ENCODE measurements at regions of chr1 and their contacts with region 1.

Region 1: DNA sequence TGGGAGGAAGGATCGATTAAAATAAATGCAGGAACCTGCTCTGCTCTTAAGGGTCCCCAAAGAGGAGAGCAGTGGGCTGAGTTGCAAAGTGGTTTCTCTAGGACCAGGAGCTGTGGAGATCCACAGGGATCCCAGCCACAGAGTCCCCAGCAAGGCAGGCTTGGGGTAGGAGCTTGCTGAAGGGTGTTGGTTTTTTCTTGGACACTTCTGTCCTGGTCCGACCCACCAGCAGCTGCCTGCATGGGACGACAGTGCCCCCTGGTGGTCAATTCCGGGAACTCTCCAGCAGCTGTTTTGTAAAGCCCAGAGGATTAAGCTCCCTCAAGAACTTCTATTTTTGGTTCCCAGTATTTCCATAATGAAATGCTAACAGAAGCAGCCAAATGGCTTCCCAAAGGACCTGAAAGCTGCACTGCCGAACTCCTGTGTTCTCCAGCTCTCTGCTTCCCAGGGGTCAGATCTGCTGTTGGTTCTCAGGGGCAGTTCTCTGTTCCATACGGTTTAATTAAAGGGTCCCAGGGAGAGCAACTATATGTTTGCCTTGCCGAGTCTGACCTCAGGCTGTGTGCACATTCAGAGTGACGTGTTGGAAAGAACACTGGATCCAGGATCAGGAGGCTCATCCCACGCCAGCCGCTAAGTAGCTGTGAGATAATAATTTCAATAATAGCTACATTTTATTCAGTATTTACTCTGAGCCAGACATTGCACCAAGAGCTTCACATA is 23.2 kb downstream of the NENF start:
- DNase-seq: peak; percentile 15
- H3K4me3 ChIP-seq: no peak overlapping the region
- H3K27me3 ChIP-seq: no peaks in the 10 kb centered on the region; the same call in 1 of the 2 replicates
- CTCF ChIP-seq: peak; percentile 97

Region 2: GRCh38 chr1:211680752-211681327 is 775.1 kb before region 1 on chr1:
- CTCF ChIA-PET with region 1: interaction called, 30 read pairs
- POLR2A ChIA-PET with region 1: no interaction called
- DNase-seq: peak; percentile 52
- H3K4me3 ChIP-seq: no peak overlapping the region
- H3K27me3 ChIP-seq: no peaks in the 10 kb centered on the region
- CTCF ChIP-seq: peak; percentile 70

Region 3: GRCh38 chr1:211698161-211699026 is 757.6 kb before region 1 on chr1:
- CTCF ChIA-PET with region 1: interaction called, 14 read pairs
- POLR2A ChIA-PET with region 1: no interaction called
- DNase-seq: no peak
- H3K4me3 ChIP-seq: no peak overlapping the region
- H3K27me3 ChIP-seq: peaks cover 2% of the 10 kb centered on the region; the same call in 1 of the 2 replicates
- CTCF ChIP-seq: peak; percentile 98

Region 4: DNA sequence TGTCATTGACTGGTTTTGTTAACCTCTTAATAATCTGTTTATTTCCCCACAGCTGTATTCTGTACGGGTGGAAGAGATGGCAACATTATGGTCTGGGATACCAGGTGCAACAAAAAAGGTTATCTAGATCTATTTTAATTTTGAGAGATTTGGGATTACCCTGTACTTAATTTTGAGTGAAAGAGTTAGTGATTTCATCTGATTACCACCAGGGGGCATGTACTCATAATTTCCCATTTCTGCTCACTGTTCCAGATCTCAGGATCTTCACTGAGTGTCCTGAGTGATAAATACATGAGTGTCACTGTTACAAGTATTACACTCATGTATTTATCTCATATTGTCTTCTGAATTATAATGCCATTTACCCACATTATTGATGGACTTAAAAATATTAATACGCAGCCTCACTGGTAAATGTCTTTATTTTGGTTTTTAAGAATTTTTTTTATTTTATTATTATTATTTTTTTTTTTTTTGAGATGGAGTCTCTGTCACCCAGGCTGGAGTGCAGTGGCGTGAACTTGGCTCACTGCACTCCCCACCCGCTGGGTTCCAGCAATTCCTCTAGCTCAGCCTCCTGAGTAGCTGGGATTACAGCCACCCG is 393.0 kb before region 1 on chr1:
- CTCF ChIA-PET with region 1: interaction called, 152 read pairs
- POLR2A ChIA-PET with region 1: no interaction called
- DNase-seq: no peak
- H3K4me3 ChIP-seq: no peak overlapping the region
- H3K27me3 ChIP-seq: no peaks in the 10 kb centered on the region
- CTCF ChIP-seq: peak; percentile 59

Region 5: DNA sequence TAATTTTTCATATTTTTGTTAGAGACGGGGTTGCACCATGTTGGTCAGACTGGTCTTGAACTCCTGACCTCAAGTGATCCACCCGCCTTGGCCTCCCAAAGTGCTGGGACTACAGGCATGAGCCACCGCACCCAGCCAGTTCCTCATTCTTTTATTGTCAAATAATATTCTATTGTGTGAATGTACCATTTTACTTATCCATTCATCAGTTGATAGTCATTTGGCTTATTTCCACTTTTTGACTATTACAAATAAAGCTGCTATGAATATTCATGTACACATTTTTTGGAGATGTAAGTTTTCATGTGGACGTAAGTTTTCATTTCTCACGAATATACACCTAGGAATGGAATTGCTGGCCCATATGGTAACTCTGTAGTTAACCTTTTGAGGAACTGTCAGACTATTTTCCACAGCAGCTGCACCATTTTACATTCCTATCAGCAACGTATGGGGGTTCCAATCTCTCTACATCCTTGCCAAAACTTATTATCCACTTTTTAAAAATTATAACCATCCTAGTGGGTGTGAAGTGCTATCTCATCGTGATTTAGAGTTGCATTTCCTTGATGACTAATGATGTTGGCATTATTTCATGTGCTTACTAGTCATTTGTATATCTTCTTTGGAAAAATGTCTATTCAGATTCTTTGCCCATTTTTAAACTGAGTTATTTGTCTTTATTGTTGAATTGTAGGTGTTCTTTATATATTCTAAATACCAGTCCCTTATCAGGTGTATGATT is 54.0 kb before region 1 on chr1:
- CTCF ChIA-PET with region 1: no interaction called
- POLR2A ChIA-PET with region 1: no interaction called
- DNase-seq: no peak
- H3K4me3 ChIP-seq: no peak overlapping the region
- H3K27me3 ChIP-seq: no peaks in the 10 kb centered on the region
- CTCF ChIP-seq: no peak

Region 6: GRCh38 chr1:212440419-212440818 is 15.5 kb before region 1 on chr1:
- CTCF ChIA-PET with region 1: interaction called, 11 read pairs
- POLR2A ChIA-PET with region 1: no interaction called
- DNase-seq: no peak
- H3K4me3 ChIP-seq: no peak overlapping the region
- H3K27me3 ChIP-seq: no peaks in the 10 kb centered on the region
- CTCF ChIP-seq: no peak

Region 7: GRCh38 chr1:212469701-212470458 is 13.9 kb after region 1 on chr1:
- CTCF ChIA-PET with region 1: interaction called, 41 read pairs
- POLR2A ChIA-PET with region 1: interaction called, 16 read pairs
- DNase-seq: peak; percentile 95
- H3K4me3 ChIP-seq: no peak overlapping the region
- H3K27me3 ChIP-seq: no peaks in the 10 kb centered on the region; the same call in 1 of the 2 replicates
- CTCF ChIP-seq: no peak

Region 8: GRCh38 chr1:212488397-212489283 is 32.7 kb after region 1 on chr1:
- CTCF ChIA-PET with region 1: no interaction called
- POLR2A ChIA-PET with region 1: no interaction called
- DNase-seq: no peak
- H3K4me3 ChIP-seq: no peak overlapping the region
- H3K27me3 ChIP-seq: peaks cover 10% of the 10 kb centered on the region
- CTCF ChIP-seq: no peak

Region 9: GRCh38 chr1:212514056-212514614 is 58.2 kb after region 1 on chr1:
- CTCF ChIA-PET with region 1: no interaction called
- POLR2A ChIA-PET with region 1: no interaction called
- DNase-seq: no peak
- H3K4me3 ChIP-seq: no peak overlapping the region
- H3K27me3 ChIP-seq: peaks cover 14% of the 10 kb centered on the region
- CTCF ChIP-seq: no peak